CD8-positive, alpha-beta T cell (primary cell): ENCODE measurements at regions of chr19 and their contacts with region 1.

Region 1: DNA sequence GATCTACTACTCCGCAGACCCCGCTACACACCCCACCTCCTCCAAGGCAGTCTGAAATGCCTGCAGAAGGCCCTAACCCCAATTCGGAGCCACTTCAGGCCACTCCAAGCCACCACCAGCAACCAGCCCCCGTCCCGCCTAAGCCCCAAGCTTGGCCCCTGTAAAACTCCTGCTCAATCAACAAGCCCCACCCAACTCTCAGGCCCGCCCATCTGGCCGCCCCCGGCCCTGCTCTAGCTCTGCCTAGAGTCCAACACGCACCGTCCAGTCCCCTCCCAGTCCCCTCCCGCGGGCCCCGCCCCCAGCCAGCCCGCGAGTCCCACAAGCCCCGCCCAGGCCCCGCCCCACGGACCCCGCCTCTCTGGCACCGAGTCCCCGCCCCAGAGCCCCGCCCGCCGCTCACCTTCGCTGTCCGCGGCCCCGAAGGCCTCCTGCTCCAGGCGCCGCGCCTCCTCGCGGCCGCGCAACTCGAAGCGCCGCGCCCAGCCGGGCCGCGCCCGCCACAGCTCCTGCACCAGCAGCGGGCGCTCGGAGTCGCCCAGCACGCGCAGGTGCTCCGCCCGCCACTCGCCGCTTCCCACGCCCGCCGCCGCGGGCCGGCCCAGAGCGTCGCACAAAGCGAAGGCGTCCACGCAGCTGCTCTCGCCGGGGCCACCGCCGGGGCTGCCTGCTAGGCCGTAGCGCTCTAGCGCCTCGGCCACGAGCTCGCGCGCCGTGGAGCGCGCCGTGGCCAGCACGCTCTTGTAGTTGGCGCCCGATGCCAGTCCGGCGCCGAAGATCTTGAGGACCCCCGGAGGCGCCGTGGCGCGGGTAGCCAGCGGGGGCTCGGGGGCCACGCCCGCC is 1.6 kb downstream of the RASIP1 start:
- DNase-seq: peak; percentile 78 to 95 (median 91)
- ATAC-seq: peak; percentile 93
- H3K4me3 ChIP-seq: peak overlapping the region in 1 of 2 experiments; percentile 52
- H3K4me3 Mint-ChIP-seq: peak overlapping the region; percentile 69
- H3K27ac ChIP-seq: no peak overlapping the region
- H3K27ac Mint-ChIP-seq: no peak overlapping the region
- H3K4me1 ChIP-seq: peaks cover 29% of the 10 kb centered on the region
- H3K4me1 Mint-ChIP-seq: peaks cover 17% of the 10 kb centered on the region
- H3K27me3 ChIP-seq: peaks cover 2 to 7% of the 10 kb centered on the region in 2 experiments
- H3K27me3 Mint-ChIP-seq: peaks cover 6% of the 10 kb centered on the region
- CTCF ChIP-seq: no peak

Region 2: DNA sequence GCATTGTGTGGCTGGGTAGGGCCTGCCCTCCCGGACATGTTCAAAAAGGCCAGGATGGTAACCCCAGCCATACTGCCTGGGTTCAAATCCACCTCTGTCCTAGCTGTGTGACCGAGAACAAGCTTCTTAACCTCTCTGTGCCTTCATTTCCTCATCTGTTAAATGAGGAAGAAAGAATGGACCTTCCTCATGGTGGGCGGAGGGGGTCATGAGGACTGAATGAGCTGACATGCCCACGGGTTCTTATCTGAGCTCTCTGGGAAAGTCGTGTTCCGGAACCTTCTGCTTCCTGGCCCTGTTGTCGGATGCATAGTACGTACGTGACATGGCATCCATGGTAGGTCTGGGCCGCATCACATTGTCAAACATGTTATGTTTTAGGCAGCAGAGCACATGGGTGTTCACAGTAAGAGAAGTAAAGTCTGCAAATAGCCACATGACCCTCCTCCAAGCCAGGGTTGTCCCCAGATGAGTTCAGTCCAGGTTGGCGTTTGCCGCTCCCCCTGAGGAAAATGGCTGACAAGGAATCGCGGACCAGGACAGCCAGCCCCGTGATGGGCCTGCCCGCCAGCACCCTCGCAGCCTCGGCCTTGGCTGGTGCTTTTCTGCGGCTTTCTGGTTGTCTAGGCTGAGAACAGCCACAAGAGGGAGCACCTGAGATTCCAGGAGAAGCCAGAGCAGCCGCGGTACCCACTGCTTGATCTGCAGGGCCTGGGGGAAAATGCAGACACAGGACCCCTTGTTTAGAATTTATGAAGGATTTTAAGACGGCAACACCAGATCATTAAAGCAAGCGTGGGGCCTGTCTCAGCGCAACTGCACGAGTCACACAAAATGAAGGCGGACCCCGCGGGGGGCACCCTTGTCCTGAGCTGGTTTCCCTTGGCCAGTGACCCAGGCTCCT is 63.6 kb before region 1 on chr19:
- CTCF ChIA-PET with region 1: interaction called, 5 read pairs
- POLR2A ChIA-PET with region 1: no interaction called
- intact Hi-C with region 1: loop called in 1 of 2 experiments (anchors 2 kb)
- DNase-seq: peak; percentile 56 to 88 (median 74)
- ATAC-seq: peak; percentile 98
- H3K4me3 ChIP-seq: no peak overlapping the region
- H3K4me3 Mint-ChIP-seq: no peak overlapping the region
- H3K27ac ChIP-seq: no peak overlapping the region
- H3K27ac Mint-ChIP-seq: peak overlapping the region; percentile 45
- H3K4me1 ChIP-seq: peaks cover 9% of the 10 kb centered on the region
- H3K4me1 Mint-ChIP-seq: peaks cover 6% of the 10 kb centered on the region
- H3K27me3 ChIP-seq: no peaks in the 10 kb centered on the region
- H3K27me3 Mint-ChIP-seq: no peaks in the 10 kb centered on the region
- CTCF ChIP-seq: peak; percentile 64

Region 3: DNA sequence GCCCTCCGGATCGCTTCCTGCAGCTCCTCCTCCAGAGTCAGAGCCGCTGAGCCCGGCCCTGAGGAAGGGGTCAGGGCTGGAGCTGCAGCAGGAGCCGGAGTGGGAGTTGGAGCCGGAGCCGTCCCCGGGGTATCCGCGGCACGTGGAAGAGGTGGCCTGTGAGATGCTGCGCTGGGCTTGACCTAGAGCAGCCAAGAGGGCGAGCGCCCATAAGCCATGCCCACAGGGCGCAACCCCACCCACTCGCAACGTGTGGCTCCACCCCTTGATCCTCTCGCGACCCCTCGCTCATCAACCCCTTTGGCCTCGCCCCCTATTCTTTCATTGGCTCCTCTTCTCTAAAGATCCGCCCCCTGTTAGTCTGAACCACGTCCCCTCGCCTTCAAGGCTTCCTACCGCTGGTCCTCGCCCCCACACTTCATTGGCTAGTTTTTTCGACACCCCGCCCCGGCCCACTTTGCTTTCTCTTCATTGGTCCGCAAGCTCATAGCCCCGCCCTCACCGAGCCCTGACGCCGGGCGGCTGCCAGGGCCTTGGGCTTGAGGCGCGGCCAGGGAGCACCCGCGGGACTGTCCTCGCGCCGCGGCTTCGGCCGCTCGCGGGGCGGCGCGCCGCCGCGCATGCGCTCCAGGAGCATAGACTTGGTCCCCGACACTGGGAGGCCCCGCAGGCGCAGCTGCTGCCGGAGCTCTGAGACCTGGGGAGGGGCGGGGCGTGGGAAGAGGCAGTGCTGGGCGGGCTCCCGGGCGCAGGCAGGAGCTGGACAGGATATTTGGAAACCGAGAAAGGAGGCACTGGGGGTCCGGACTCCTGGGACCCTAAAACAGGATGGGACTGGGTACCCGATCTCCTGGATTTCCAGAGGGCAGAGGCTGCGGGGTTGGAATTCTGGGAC is 24.7 kb before region 1 on chr19:
- CTCF ChIA-PET with region 1: interaction called, 7 read pairs
- POLR2A ChIA-PET with region 1: interaction called, 10 read pairs
- intact Hi-C with region 1: loop called (anchors 1 kb)
- DNase-seq: peak; percentile 94 to 99 (median 96)
- ATAC-seq: peak; percentile 95
- H3K4me3 ChIP-seq: peak overlapping the region; percentile 76 to 83
- H3K4me3 Mint-ChIP-seq: peak overlapping the region; percentile 85
- H3K27ac ChIP-seq: peak overlapping the region; percentile 45 to 70
- H3K27ac Mint-ChIP-seq: peak overlapping the region; percentile 73
- H3K4me1 ChIP-seq: peaks cover 20% of the 10 kb centered on the region
- H3K4me1 Mint-ChIP-seq: peaks cover 18% of the 10 kb centered on the region
- H3K27me3 ChIP-seq: no peaks in the 10 kb centered on the region
- H3K27me3 Mint-ChIP-seq: no peaks in the 10 kb centered on the region
- CTCF ChIP-seq: no peak

Region 4: GRCh38 chr19:48720613-48721296 is 18.0 kb before region 1 on chr19:
- CTCF ChIA-PET with region 1: interaction called, 6 read pairs
- POLR2A ChIA-PET with region 1: interaction called, 8 read pairs
- intact Hi-C with region 1: loop called in 1 of 2 experiments (anchors 2 kb)
- DNase-seq: peak; percentile 81 to 96 (median 90)
- ATAC-seq: peak; percentile 80
- H3K4me3 ChIP-seq: peak overlapping the region; percentile 65 to 69
- H3K4me3 Mint-ChIP-seq: peak overlapping the region; percentile 96
- H3K27ac ChIP-seq: peak overlapping the region; percentile 52 to 88
- H3K27ac Mint-ChIP-seq: peak overlapping the region; percentile 96
- H3K4me1 ChIP-seq: peaks cover 16% of the 10 kb centered on the region
- H3K4me1 Mint-ChIP-seq: peaks cover 24% of the 10 kb centered on the region
- H3K27me3 ChIP-seq: no peaks in the 10 kb centered on the region
- H3K27me3 Mint-ChIP-seq: no peaks in the 10 kb centered on the region
- CTCF ChIP-seq: no peak

Region 5: DNA sequence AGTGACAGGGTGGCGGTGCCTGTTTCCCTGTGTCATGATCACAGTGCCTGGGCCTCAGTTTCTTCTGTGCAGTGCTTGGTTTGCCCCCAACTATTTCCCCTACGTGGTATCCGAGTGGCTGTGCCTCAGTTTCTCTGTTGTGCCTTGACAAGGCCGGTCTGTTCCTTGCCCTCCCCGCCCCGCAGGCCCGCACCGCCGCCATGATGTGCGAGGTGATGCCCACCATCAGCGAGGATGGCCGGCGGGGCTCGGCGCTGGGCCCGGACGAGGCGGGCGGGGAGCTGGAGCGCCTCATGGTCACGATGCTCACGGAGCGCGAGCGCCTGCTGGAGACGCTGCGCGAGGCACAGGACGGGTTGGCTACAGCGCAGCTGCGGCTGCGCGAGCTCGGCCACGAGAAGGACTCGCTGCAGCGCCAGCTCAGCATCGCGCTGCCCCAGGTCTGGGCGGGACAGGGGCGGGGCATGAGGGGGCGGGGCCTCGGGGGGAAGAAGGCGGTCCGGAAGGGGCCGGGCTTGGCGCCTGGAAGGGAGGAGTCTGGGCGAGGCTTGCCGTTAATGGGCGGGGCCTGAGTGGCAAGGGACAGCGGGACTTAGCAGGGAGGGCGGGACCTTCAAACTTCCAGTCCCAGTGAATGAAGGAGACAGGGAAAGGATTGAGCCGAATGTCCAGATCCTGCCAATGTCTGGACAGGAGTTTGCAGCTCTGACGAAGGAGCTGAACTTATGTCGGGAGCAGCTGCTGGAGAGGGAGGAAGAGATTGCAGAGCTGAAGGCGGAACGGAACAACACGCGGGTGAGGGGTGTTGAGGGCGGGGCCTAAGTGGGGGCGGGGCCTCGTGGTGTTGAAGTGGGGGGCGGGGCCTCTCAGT is 389.1 kb after region 1 on chr19:
- CTCF ChIA-PET with region 1: no interaction called
- POLR2A ChIA-PET with region 1: no interaction called
- intact Hi-C with region 1: loop called in 1 of 2 experiments (anchors 2 kb)
- DNase-seq: peak; percentile 88 to 97 (median 91)
- ATAC-seq: peak; percentile 96
- H3K4me3 ChIP-seq: peak overlapping the region; percentile 51 to 56
- H3K4me3 Mint-ChIP-seq: peak overlapping the region; percentile 79
- H3K27ac ChIP-seq: no peak overlapping the region
- H3K27ac Mint-ChIP-seq: peak overlapping the region; percentile 80
- H3K4me1 ChIP-seq: peaks cover 11% of the 10 kb centered on the region
- H3K4me1 Mint-ChIP-seq: peaks cover 17% of the 10 kb centered on the region
- H3K27me3 ChIP-seq: no peaks in the 10 kb centered on the region
- H3K27me3 Mint-ChIP-seq: no peaks in the 10 kb centered on the region
- CTCF ChIP-seq: no peak

Region 6: DNA sequence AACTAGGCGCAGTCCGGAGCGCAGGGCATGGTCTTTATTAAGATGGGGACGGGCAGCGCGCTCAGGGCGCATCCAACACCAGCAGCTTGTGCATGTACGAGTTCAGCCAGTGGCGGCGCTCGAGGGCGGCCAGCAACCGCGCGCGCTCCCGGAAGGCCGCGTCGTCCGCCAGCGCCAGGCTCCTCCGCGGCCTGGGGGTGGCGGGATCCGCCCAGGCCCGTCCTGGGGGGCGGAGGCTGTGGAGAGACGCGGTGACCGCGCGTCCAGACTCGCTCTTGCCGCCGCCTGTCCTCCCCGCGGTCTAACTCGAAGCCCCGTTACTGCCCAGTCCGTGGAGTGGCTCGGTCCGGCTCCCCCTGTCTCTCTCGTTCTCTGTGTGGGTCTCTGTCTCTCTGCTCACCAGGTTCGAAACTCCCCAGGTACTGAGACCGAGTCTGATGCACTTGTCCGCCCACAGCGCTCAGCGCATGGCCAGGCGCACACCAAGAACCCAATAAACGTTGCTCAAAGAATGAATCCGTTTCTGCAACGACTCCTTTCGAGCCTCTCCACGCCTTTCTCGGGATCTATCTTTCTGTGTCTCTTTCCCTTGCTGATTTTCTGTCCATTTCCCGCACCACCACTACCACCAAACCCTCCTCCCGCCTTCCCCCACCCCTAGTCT is 683.8 kb after region 1 on chr19:
- CTCF ChIA-PET with region 1: no interaction called
- POLR2A ChIA-PET with region 1: no interaction called
- intact Hi-C with region 1: no loop called
- DNase-seq: peak in 5 of 9 experiments; percentile 34 to 69 (median 51)
- ATAC-seq: peak; percentile 57
- H3K4me3 ChIP-seq: peak overlapping the region; percentile 12 to 44
- H3K4me3 Mint-ChIP-seq: peak overlapping the region; percentile 73
- H3K27ac ChIP-seq: no peak overlapping the region
- H3K27ac Mint-ChIP-seq: no peak overlapping the region
- H3K4me1 ChIP-seq: peaks cover 43% of the 10 kb centered on the region
- H3K4me1 Mint-ChIP-seq: peaks cover 54% of the 10 kb centered on the region
- H3K27me3 ChIP-seq: peaks cover 50 to 66% of the 10 kb centered on the region in 2 experiments
- H3K27me3 Mint-ChIP-seq: peaks cover 82% of the 10 kb centered on the region
- CTCF ChIP-seq: peak; percentile 54